Right cardiac atrium (tissue), 5 donors: ENCODE measurements at regions of chr2 and their contacts with region 1.

Region 1: DNA sequence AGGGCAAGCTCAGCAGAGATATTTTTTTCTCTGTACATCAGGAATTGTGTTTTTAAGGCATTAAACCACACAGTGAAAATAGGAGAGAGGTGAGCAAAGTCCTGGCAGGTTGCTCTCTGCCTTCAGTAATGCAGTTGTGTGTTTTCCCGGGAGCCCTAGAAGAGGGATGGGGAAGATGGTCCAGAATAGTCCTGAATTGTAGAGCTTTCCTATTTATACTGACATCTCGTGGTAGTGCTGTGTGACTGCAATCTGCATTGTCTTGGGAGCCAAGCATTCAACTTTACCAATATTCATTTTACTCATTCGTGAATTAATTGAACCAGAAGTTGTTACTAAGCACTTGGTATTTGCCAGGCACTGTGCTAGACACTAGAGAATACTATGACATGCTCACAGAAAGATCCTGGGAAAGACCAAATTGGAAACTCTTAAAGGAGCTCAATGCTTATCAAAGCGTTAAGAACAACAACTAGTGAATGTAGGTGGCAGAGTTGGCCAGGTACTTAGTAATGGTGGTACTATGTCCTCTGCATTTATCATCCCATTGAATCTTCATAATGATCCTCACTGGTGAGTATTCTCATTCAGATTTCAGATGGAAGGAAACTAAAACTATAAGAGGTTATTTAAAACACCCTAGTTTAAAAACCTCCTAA is 214.6 kb downstream of the TRIB2 start:
- DNase-seq: no peak
- ATAC-seq: peak; percentile 86 to 89
- H3K4me3 ChIP-seq: no peak overlapping the region
- H3K27ac ChIP-seq: no peak overlapping the region
- H3K4me1 ChIP-seq: peaks cover 2% of the 10 kb centered on the region
- H3K27me3 ChIP-seq: no peaks in the 10 kb centered on the region

Region 2: DNA sequence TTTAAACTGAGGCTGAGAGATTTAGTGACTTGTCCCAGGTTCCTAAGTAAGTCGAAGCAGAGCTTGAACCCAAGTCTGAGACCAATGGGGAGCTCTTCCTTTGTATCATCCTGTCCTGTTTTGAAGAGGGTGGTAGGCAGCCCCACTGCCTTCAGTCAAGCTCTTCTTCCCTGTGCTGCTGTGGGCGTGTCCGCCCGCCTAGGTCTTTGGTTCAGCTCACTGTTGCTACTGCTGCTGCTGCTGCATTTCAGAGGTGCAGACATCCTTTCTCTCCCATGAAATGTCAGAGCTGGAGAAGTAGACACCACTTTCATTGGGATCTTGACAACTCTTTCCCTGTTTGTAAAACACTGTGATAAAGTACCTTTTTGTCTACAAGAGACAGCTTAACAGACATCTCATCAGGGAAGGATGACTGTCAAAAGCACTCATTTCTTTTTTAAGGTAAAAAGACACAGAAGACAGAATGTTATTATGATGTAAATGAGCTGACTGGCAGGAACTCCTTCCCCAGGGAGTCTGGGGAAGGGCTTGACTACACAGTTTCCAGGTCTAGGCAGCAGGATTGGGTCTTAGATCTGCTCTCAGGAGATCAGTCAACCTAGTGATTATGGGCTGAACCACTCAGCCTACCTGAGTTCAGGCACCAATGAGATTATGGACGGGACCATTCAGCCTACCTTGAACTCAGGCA is 306.3 kb before region 1 on chr2:
- intact Hi-C with region 1: no loop called
- DNase-seq: no peak
- ATAC-seq: no peak
- H3K4me3 ChIP-seq: no peak overlapping the region
- H3K27ac ChIP-seq: no peak overlapping the region
- H3K4me1 ChIP-seq: no peaks in the 10 kb centered on the region
- H3K27me3 ChIP-seq: no peaks in the 10 kb centered on the region

Region 3: DNA sequence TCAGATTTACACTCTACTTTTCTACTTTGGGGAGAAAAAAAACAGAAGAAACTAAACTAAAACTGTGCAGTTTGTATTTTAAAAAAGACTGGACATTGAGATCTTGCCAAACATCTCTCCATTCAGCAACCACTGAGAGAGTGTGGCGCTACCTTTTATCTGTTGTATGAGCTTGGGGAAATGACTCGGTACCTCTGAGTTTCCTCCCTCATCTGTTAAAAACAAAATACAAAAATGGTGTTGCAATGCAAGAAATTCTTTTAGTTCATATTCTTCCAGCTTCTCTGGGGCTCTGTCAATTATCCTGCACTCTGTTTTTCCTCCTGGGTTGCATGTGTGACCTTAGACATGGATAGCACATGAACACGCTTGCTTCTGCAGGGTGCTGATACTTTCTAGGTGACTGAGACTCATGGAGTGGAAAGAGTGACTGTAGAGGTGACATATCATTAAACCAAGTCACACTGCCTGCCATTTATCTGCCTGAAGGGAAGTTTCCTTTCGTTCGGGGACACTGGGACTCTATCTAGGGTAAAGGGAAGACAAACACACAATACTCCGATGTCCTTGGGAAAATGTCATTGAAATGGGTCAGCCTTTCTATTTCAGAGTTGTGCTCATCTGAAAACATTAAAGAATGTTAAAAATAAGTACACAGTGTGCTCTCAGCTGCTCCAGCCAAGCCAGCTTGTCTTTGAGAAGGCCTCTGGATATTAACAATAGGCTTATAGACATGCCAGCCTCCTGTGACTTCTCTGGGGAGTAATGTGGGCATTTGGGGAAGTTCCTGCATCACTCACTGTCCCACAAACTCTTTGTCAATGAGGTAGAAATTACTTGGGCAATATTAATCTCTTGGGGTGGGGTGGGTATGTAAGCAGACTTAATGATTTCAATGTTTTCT is 123.2 kb before region 1 on chr2:
- intact Hi-C with region 1: loop called in 1 of 4 experiments (anchors 5 kb)
- DNase-seq: peak in 1 of 3 donors; percentile 59
- ATAC-seq: peak; percentile 64 to 83
- H3K4me3 ChIP-seq: no peak overlapping the region
- H3K27ac ChIP-seq: peak overlapping the region; percentile 75
- H3K4me1 ChIP-seq: peaks cover 16% of the 10 kb centered on the region
- H3K27me3 ChIP-seq: no peaks in the 10 kb centered on the region

Region 4: DNA sequence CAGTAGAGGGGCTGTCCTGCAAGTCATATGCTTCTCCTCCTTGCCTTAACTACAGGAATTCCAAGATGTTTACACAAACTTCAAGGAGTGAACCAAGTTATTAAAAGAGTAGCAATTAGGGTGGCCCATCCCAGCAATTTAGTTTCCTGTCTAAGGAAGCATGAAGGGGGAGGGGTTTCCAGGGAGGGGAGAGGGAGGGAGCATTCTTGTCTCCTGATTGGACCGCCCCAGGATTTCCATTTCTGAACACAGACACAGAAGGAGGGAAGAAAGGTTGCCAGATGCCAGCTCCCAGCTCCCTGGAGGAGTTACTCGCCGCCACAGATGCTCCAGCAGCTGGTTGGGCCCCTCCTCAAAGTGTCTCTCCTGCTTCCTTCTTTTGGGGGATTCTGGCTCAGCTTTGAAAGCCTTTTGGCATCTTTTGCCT is 107.0 kb before region 1 on chr2:
- intact Hi-C with region 1: loop called in 1 of 4 experiments (anchors 10 kb)
- DNase-seq: peak; percentile 58 to 73 (median 72)
- ATAC-seq: peak; percentile 69 to 76
- H3K4me3 ChIP-seq: no peak overlapping the region
- H3K27ac ChIP-seq: peak overlapping the region; percentile 98
- H3K4me1 ChIP-seq: peaks cover 6% of the 10 kb centered on the region
- H3K27me3 ChIP-seq: no peaks in the 10 kb centered on the region

Region 5: GRCh38 chr2:12867631-12868287 is 63.6 kb before region 1 on chr2:
- intact Hi-C with region 1: no loop called
- DNase-seq: no peak
- ATAC-seq: no peak
- H3K4me3 ChIP-seq: no peak overlapping the region
- H3K27ac ChIP-seq: no peak overlapping the region
- H3K4me1 ChIP-seq: no peaks in the 10 kb centered on the region
- H3K27me3 ChIP-seq: no peaks in the 10 kb centered on the region